B cell (primary cell): ENCODE measurements at regions of chr1 and their contacts with region 1.

Region 1: DNA sequence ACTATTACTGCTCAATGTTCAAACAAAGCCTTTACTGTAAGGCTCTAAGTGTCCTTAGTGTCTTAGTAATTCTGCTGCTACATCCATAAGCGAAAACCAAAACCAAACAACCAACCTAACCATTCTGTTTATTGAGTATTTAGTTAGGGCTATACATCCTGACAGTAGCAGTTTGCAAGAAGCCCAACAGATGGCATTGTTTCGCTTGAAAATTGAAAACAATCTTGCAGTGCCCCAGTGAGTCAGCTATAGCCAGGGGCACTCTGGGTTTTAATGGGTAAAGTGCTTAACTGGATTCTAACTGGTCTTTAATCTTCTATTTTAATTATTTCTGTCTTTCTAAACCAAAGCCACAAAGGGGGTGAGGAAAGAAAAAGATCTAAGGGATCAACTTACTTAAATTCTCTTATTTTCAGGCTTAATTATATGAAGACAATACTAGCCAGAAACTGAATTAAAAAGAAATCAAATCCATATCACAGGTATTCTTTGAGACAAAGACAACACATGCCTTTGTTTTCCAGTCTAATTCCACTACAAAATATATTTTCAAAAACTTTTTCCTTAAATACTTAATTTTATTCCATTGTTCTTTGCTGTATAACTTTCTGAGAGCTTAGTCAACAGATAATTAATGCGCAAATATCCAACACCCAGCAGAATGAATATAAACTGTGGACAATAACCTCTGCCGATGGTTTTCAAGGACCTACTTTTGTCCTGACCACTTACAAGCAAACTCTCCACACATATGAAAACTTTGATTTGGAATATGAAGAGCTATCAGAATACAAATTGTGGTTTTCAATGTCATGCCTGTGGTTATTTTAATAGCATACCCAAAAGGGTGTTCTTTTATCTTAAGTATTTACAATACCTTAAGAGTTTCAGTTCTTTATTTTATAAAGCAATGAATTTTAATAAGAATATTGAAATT is 15.2 kb downstream of the POGZ start:
- DNase-seq: peak; percentile 80
- ATAC-seq: peak; percentile 94
- H3K4me3 ChIP-seq: no peak overlapping the region
- H3K4me3 Mint-ChIP-seq: no peak overlapping the region
- H3K27ac ChIP-seq: peak overlapping the region in 1 of 2 donors; percentile 28
- H3K27ac Mint-ChIP-seq: peak overlapping the region; percentile 24
- H3K4me1 ChIP-seq: peaks cover 19 to 21% of the 10 kb centered on the region in 2 donors
- H3K4me1 Mint-ChIP-seq: peaks cover 46% of the 10 kb centered on the region
- H3K27me3 ChIP-seq: no peaks in the 10 kb centered on the region
- H3K27me3 Mint-ChIP-seq: no peaks in the 10 kb centered on the region
- CTCF ChIP-seq: peak; percentile 87

Region 2: DNA sequence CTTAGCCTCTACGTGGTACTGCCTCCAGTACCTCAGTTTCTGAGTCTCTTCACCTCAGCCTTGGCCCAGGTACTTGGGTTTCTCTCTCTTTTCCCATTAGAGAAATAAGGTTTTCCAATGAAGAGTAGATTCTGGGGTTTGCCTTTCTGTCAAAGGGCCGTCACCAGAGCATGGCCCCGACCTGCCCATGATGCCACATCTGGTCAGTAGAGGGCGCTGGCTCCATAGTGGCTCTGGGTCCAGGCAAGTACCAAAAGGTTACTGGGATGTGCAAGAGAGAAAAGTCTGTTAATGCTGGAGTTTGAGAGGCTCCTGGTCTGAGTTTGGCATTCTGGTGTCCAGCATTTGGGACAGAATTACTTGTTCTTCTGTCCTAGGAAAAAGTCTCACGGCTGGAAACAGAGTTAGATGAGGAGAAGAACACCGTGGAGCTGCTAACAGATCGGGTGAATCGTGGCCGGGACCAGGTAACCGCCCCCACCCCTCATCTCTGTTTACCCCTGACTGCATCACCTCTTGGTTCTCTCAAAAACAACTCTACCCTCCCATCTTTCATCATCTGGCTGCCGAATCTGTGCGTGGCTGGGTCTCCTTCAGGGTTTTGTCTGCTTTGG is 90.7 kb after region 1 on chr1:
- CTCF ChIA-PET with region 1: interaction called, 3 read pairs
- POLR2A ChIA-PET with region 1: no interaction called
- intact Hi-C with region 1: loop called (anchors 5 kb)
- DNase-seq: peak; percentile 72
- ATAC-seq: peak; percentile 67
- H3K4me3 ChIP-seq: no peak overlapping the region
- H3K4me3 Mint-ChIP-seq: no peak overlapping the region
- H3K27ac ChIP-seq: no peak overlapping the region
- H3K27ac Mint-ChIP-seq: no peak overlapping the region
- H3K4me1 ChIP-seq: peaks cover 5 to 7% of the 10 kb centered on the region in 2 donors
- H3K4me1 Mint-ChIP-seq: peaks cover 4% of the 10 kb centered on the region
- H3K27me3 ChIP-seq: no peaks in the 10 kb centered on the region
- H3K27me3 Mint-ChIP-seq: peaks cover 3% of the 10 kb centered on the region
- CTCF ChIP-seq: peak; percentile 78

Region 3: GRCh38 chr1:151594143-151594625 is 150.1 kb after region 1 on chr1:
- CTCF ChIA-PET with region 1: interaction called, 14 read pairs
- POLR2A ChIA-PET with region 1: no interaction called
- intact Hi-C with region 1: loop called (anchors 1 kb)
- DNase-seq: peak; percentile 87
- ATAC-seq: peak; percentile 97
- H3K4me3 ChIP-seq: peak overlapping the region in 4 of 5 experiments; percentile 21 to 41 (median 30)
- H3K4me3 Mint-ChIP-seq: peak overlapping the region; percentile 71
- H3K27ac ChIP-seq: no peak overlapping the region
- H3K27ac Mint-ChIP-seq: peak overlapping the region; percentile 0
- H3K4me1 ChIP-seq: peaks cover 7 to 9% of the 10 kb centered on the region in 2 donors
- H3K4me1 Mint-ChIP-seq: peaks cover 9% of the 10 kb centered on the region
- H3K27me3 ChIP-seq: peaks cover 0 to 3% (median 0%) of the 10 kb centered on the region in 4 experiments
- H3K27me3 Mint-ChIP-seq: peaks cover 11% of the 10 kb centered on the region
- CTCF ChIP-seq: peak; percentile 94

Region 4: DNA sequence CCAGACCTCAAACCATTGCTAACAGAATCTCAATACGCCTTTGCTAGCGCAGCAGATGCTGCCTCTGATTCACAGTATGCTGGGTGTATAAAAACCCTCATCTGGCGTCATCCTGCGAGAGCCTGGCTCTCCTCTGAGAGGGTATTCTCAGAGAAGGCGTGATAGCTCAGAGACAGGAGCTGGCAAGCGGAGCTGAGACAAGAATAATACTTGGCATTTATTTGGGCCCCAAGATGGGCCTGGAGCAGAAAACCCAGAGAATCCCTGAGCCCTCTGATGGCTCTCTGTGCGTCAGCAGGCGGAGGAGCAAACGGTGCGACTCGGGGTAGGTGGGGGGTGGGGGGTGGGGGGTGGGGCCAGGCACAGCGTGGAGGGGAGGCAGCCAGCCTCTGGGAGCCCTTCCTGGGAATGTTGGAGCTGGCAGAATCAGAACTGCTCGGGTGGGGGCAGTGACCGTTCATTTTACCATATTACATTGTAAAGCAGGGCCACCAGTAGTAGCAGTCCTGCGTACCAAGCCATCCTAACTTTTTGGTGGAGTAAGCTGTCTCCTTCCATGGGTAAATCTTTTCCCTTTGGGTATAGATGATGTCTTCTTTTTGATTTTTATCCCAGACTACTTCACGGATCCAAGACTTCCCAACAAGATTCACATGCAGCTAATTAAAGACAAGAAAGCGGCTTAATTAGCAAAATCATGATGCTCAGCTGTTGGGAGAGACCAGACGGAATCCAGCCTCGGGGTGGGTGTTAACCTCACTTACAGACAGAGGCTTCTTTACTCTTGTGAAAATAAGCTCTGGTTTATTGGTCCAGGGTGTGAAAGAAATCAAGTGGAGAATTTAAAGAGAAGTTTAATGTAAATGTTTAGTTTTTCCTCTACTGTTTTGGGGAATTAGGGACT is 284.3 kb after region 1 on chr1:
- CTCF ChIA-PET with region 1: interaction called, 20 read pairs
- POLR2A ChIA-PET with region 1: no interaction called
- intact Hi-C with region 1: no loop called
- DNase-seq: no peak
- ATAC-seq: no peak
- H3K4me3 ChIP-seq: no peak overlapping the region
- H3K4me3 Mint-ChIP-seq: no peak overlapping the region
- H3K27ac ChIP-seq: no peak overlapping the region
- H3K27ac Mint-ChIP-seq: no peak overlapping the region
- H3K4me1 ChIP-seq: no peaks in the 10 kb centered on the region
- H3K4me1 Mint-ChIP-seq: no peaks in the 10 kb centered on the region
- H3K27me3 ChIP-seq: peaks cover 0 to 43% (median 22%) of the 10 kb centered on the region in 4 experiments
- H3K27me3 Mint-ChIP-seq: peaks cover 70% of the 10 kb centered on the region
- CTCF ChIP-seq: no peak

Region 5: DNA sequence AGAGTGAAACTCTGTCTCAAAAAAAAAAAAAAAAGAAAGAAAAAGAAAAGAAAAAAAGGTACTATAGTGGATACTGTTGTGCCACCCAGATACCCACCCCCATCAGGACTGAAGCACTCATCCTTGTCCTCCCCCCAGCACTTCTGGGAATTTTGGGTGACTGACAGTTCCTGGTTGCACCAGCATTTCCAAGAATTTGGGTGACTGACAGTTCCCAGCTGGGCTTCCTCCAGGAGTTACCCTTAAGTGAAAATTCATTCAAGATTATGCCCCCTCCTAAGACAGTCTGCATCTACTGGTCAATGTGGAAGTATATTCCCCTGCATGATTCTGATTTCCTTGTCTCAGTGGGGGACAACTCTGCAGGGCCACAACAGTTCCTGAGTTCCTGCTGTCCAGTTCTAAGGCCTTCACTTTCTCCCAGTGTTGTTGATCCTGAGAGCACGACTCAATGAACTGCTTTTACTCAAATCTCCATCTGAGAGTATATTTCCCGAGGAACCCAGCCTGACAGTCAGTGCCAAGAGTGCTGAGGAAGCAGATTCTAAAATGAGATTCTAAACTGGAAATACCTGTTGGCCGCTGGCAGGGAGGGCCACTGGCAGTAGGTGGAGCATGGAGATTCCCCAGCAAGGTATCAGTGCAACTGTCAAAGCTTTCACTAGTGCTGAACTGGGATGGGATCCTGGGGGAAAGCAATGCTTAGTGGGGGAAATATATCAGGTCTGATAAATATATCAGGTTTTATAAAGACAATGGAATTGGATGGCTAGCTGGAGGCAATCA is 295.7 kb after region 1 on chr1:
- CTCF ChIA-PET with region 1: interaction called, 20 read pairs
- POLR2A ChIA-PET with region 1: no interaction called
- intact Hi-C with region 1: loop called (anchors 1 kb)
- DNase-seq: no peak
- ATAC-seq: no peak
- H3K4me3 ChIP-seq: no peak overlapping the region
- H3K4me3 Mint-ChIP-seq: no peak overlapping the region
- H3K27ac ChIP-seq: no peak overlapping the region
- H3K27ac Mint-ChIP-seq: no peak overlapping the region
- H3K4me1 ChIP-seq: no peaks in the 10 kb centered on the region
- H3K4me1 Mint-ChIP-seq: no peaks in the 10 kb centered on the region
- H3K27me3 ChIP-seq: peaks cover 0 to 6% (median 1%) of the 10 kb centered on the region in 4 experiments
- H3K27me3 Mint-ChIP-seq: no peaks in the 10 kb centered on the region
- CTCF ChIP-seq: no peak

Region 6: GRCh38 chr1:151839457-151840405 is 395.6 kb after region 1 on chr1 and contains the start of gene C2CD4D:
- CTCF ChIA-PET with region 1: interaction called, 11 read pairs
- POLR2A ChIA-PET with region 1: no interaction called
- intact Hi-C with region 1: no loop called
- DNase-seq: peak; percentile 78
- ATAC-seq: peak; percentile 53
- H3K4me3 ChIP-seq: peak within 1 kb of the TSS in 4 of 5 experiments; percentile 36 to 56 (median 44)
- H3K4me3 Mint-ChIP-seq: peak within 1 kb of the TSS; percentile 87
- H3K27ac ChIP-seq: no peak within 1 kb of the TSS
- H3K27ac Mint-ChIP-seq: peak within 1 kb of the TSS; percentile 81
- H3K4me1 ChIP-seq: peaks cover 36 to 41% of the 10 kb centered on the region in 2 donors
- H3K4me1 Mint-ChIP-seq: peaks cover 38% of the 10 kb centered on the region
- H3K27me3 ChIP-seq: peaks cover 0 to 20% (median 7%) of the 10 kb centered on the region in 4 experiments
- H3K27me3 Mint-ChIP-seq: peaks cover 10% of the 10 kb centered on the region
- CTCF ChIP-seq: no peak
- total RNA-seq, gene C2CD4D: not detected in 2 replicates

Region 7: GRCh38 chr1:151993654-151994496 is 549.8 kb after region 1 on chr1 and contains the start of gene S100A10:
- CTCF ChIA-PET with region 1: interaction called, 3 read pairs
- POLR2A ChIA-PET with region 1: no interaction called
- intact Hi-C with region 1: loop called (anchors 5 kb)
- DNase-seq: peak; percentile 78
- ATAC-seq: peak; percentile 77
- H3K4me3 ChIP-seq: peak within 1 kb of the TSS; percentile 45 to 78 (median 67)
- H3K4me3 Mint-ChIP-seq: peak within 1 kb of the TSS; percentile 94
- H3K27ac ChIP-seq: peak within 1 kb of the TSS; percentile 51 to 73
- H3K27ac Mint-ChIP-seq: peak within 1 kb of the TSS; percentile 93
- H3K4me1 ChIP-seq: peaks cover 13 to 26% of the 10 kb centered on the region in 2 donors
- H3K4me1 Mint-ChIP-seq: peaks cover 30% of the 10 kb centered on the region
- H3K27me3 ChIP-seq: peaks cover 0 to 6% (median 2%) of the 10 kb centered on the region in 4 experiments
- H3K27me3 Mint-ChIP-seq: peaks cover 6% of the 10 kb centered on the region
- CTCF ChIP-seq: no peak
- total RNA-seq, gene S100A10: 40.4 and 47.1 TPM in 2 replicates